CD4-positive, alpha-beta memory T cell (primary cell): ENCODE measurements at regions of chr5 and their contacts with region 1.

Region 1: DNA sequence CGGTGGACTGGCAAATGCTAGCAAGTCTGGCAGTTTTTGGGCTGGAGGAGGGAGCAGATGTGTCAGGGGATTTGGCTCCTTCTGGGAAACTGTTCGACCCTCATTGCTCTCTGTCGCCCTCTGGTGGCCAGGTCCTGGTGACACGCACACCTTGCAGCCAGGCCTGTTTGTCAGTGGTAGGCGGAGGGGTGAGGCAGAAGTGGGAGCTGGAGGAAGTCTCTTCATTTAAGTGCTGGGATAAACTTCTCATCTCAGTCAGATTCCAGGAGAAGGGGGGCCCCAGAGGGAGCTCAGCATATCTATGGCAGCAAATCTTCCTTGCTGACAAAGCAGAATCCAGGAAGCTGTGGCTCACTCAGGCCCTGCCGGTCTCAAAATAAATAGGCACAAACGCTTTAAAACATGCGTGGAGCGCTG is 326.5 kb downstream of the ZSWIM6 start:
- DNase-seq: peak; percentile 58 to 67 (median 61)
- H3K4me3 ChIP-seq: no peak overlapping the region
- H3K4me3 Mint-ChIP-seq: no peak overlapping the region
- H3K27ac ChIP-seq: no peak overlapping the region
- H3K27ac Mint-ChIP-seq: no peak overlapping the region
- H3K4me1 ChIP-seq: no peaks in the 10 kb centered on the region
- H3K4me1 Mint-ChIP-seq: peaks cover 0 to 2% (median 0%) of the 10 kb centered on the region in 4 donors
- H3K27me3 ChIP-seq: peaks cover 3% of the 10 kb centered on the region
- H3K27me3 Mint-ChIP-seq: peaks cover 5 to 19% of the 10 kb centered on the region in 2 donors

Region 2: DNA sequence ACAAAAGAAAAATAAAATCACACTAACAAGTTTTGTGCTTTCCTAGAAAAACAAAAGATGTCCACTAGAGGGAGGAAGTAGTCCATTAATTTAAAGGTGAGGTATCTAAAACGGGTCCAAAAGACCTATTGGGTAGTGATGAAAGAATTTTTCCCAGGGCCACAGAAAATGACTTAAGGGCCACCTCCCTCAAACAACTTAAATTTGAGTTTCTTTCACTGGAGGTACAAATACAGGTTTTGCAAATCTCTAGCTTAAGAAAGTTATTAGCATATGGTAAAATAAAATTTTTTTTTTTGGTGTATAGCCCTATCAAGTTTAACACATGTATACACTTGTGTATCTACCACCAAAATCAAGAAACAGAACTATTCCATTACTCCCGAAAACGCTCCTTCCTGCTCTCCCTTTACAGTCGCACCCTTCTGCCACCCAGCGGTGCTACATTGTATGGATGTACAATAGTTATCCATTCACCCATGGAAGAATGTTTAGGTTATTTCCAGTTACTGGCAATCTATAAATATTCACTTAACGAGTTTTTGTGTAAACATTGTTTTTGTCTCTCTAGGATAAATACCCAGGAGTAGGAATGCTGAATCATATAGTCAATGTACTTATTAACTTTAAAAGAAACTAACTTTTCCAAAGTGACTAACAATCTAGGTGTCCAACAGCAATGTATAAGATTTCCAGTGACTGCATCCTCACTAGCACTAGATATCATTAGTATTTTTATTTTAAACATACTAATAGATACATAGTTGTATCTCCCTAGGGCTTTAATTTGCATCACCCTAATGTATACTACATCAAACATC is 980.5 kb before region 1 on chr5:
- CTCF ChIA-PET with region 1: interaction called, 25 read pairs
- POLR2A ChIA-PET with region 1: no interaction called
- intact Hi-C with region 1: loop called (anchors 1 kb)
- DNase-seq: peak in 4 of 5 donors; percentile 26 to 33 (median 28)
- H3K4me3 ChIP-seq: no peak overlapping the region
- H3K4me3 Mint-ChIP-seq: peak overlapping the region in 3 of 8 donors; percentile 5 to 46 (median 44)
- H3K27ac ChIP-seq: no peak overlapping the region
- H3K27ac Mint-ChIP-seq: no peak overlapping the region
- H3K4me1 ChIP-seq: peaks cover 7% of the 10 kb centered on the region
- H3K4me1 Mint-ChIP-seq: peaks cover 0 to 4% (median 1%) of the 10 kb centered on the region in 4 donors
- H3K27me3 ChIP-seq: no peaks in the 10 kb centered on the region
- H3K27me3 Mint-ChIP-seq: peaks cover 0 to 1% of the 10 kb centered on the region in 2 donors

Region 3: GRCh38 chr5:60960591-60960990 is 698.0 kb before region 1 on chr5:
- CTCF ChIA-PET with region 1: interaction called, 35 read pairs
- POLR2A ChIA-PET with region 1: no interaction called
- intact Hi-C with region 1: loop called (anchors 1 kb)
- DNase-seq: peak in 4 of 5 donors; percentile 8 to 24 (median 20)
- H3K4me3 ChIP-seq: no peak overlapping the region
- H3K4me3 Mint-ChIP-seq: no peak overlapping the region
- H3K27ac ChIP-seq: no peak overlapping the region
- H3K27ac Mint-ChIP-seq: no peak overlapping the region
- H3K4me1 ChIP-seq: peaks cover 8% of the 10 kb centered on the region
- H3K4me1 Mint-ChIP-seq: peaks cover 5 to 13% (median 9%) of the 10 kb centered on the region in 4 donors
- H3K27me3 ChIP-seq: no peaks in the 10 kb centered on the region
- H3K27me3 Mint-ChIP-seq: no peaks in the 10 kb centered on the region

Region 4: GRCh38 chr5:61055434-61056006 is 603.1 kb before region 1 on chr5:
- CTCF ChIA-PET with region 1: interaction called, 107 read pairs
- POLR2A ChIA-PET with region 1: no interaction called
- intact Hi-C with region 1: loop called (anchors 1 kb)
- DNase-seq: peak; percentile 5 to 32 (median 16)
- H3K4me3 ChIP-seq: no peak overlapping the region
- H3K4me3 Mint-ChIP-seq: no peak overlapping the region
- H3K27ac ChIP-seq: no peak overlapping the region
- H3K27ac Mint-ChIP-seq: no peak overlapping the region
- H3K4me1 ChIP-seq: no peaks in the 10 kb centered on the region
- H3K4me1 Mint-ChIP-seq: peaks cover 0 to 3% (median 0%) of the 10 kb centered on the region in 4 donors
- H3K27me3 ChIP-seq: no peaks in the 10 kb centered on the region
- H3K27me3 Mint-ChIP-seq: no peaks in the 10 kb centered on the region

Region 5: DNA sequence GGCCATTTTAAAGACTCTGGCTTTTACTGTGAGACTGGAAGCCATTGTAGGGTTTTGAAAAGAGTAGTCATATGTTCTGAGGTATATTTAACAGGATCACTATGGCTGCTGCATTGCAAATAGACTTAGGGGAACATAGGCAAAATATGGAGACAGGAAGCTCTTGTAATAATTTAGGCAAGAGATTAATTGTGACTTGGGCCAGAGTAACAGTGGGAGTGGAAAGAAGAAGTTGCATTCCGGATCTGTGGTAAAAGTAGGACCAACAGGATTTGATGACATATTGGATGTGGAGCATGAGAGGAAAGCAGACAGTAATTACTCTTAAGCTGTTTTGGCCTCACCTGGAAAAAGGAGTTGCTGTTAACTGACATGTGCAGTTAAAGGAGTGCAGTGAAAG is 582.0 kb before region 1 on chr5:
- CTCF ChIA-PET with region 1: no interaction called
- POLR2A ChIA-PET with region 1: no interaction called
- intact Hi-C with region 1: no loop called
- DNase-seq: no peak
- H3K4me3 ChIP-seq: no peak overlapping the region
- H3K4me3 Mint-ChIP-seq: no peak overlapping the region
- H3K27ac ChIP-seq: no peak overlapping the region
- H3K27ac Mint-ChIP-seq: no peak overlapping the region
- H3K4me1 ChIP-seq: no peaks in the 10 kb centered on the region
- H3K4me1 Mint-ChIP-seq: peaks cover 0 to 2% (median 0%) of the 10 kb centered on the region in 4 donors
- H3K27me3 ChIP-seq: no peaks in the 10 kb centered on the region
- H3K27me3 Mint-ChIP-seq: no peaks in the 10 kb centered on the region

Region 6: DNA sequence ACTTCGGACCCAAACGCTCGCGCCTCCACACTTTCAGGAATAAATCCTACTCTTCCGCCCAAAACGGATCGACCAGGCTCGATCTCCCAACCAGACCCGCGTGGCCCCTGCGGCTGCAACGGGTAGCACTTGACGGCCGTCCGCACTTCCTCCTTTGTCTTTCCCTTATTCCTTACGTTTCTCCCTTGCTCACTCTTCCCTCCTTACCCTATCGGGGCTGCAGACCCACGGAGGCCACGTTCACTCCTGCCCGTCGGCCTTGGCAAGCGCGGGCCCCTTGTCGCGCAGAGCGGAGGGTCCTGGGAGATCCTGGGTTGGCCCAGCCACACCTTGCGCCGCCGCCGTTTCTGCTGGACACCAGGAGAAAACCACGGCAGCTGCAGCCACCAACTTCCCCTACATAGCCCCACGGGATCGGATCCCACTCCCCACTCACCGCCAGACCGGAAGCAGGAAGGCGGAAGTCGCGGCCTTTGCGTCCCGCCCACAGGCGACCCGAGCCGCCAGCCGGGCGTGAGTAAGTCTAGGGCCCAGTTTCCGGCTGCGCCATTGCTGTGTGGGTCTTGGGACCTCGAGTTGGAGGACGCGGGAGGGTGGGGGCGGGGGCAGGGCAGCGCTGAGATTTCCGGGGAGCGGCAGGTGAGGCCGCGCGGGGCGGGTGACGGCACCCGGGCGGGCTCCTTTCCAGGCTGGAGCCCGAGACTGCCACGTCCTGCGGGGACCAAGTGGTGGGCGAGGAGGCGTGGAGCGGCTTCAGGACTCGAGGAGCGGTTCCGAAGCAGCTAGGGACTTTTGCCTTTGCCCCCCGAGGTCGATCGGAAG is 496.4 kb before region 1 on chr5 and contains the start of gene SMIM15:
- CTCF ChIA-PET with region 1: interaction called, 8 read pairs
- POLR2A ChIA-PET with region 1: no interaction called
- intact Hi-C with region 1: loop called (anchors 5 kb)
- DNase-seq: peak; percentile 67 to 77 (median 72)
- H3K4me3 ChIP-seq: peak within 1 kb of the TSS; percentile 88
- H3K4me3 Mint-ChIP-seq: peak within 1 kb of the TSS; percentile 92 to 100 (median 96)
- H3K27ac ChIP-seq: peak within 1 kb of the TSS; percentile 67
- H3K27ac Mint-ChIP-seq: peak within 1 kb of the TSS; percentile 89 to 99 (median 96)
- H3K4me1 ChIP-seq: peaks cover 26% of the 10 kb centered on the region
- H3K4me1 Mint-ChIP-seq: peaks cover 29 to 46% (median 38%) of the 10 kb centered on the region in 4 donors
- H3K27me3 ChIP-seq: no peaks in the 10 kb centered on the region
- H3K27me3 Mint-ChIP-seq: no peaks in the 10 kb centered on the region
- total RNA-seq, gene SMIM15: 33.1 to 37.7 TPM

Region 7: DNA sequence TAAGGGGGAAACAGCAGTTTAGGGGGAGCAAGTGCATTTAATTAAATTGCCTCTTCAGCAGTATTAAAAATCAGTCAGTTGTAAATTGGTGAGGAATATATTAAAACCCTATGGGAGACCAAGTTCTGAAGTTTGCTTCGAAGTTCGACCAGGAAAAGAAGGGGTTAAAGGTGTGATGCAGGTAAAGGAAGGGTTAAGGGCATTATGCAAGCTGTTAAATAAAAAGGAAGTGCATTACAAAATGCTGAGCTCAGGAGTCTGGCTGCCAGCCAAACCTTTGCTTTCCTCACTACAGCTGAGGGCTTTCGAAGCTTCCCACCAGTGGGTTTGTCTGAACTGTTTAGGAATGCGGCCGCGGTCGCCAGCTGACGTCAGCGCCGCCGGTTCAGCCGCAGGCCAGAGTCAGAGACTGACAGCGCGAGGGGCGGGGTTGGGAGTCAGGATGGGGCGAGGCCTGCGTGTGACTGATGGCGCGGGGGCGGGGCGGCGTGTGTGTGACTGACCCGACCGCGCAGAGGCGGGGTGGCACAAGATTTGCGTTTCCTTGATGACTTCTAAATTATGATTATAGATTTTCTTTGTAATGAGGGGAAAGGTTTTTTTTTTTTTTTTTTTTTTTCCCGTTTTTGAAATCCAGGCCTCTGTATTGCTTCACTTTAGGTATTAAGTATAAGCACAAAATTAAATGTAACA is 250.0 kb before region 1 on chr5:
- CTCF ChIA-PET with region 1: no interaction called
- POLR2A ChIA-PET with region 1: no interaction called
- intact Hi-C with region 1: loop called (anchors 1 kb)
- DNase-seq: peak; percentile 96 to 99 (median 98)
- H3K4me3 ChIP-seq: no peak overlapping the region
- H3K4me3 Mint-ChIP-seq: peak overlapping the region; percentile 78 to 91 (median 84)
- H3K27ac ChIP-seq: no peak overlapping the region
- H3K27ac Mint-ChIP-seq: peak overlapping the region; percentile 86 to 97 (median 94)
- H3K4me1 ChIP-seq: peaks cover 19% of the 10 kb centered on the region
- H3K4me1 Mint-ChIP-seq: peaks cover 18 to 35% (median 26%) of the 10 kb centered on the region in 4 donors
- H3K27me3 ChIP-seq: no peaks in the 10 kb centered on the region
- H3K27me3 Mint-ChIP-seq: peaks cover 0 to 2% of the 10 kb centered on the region in 2 donors

Region 8: GRCh38 chr5:61647672-61648071 is 10.9 kb before region 1 on chr5:
- CTCF ChIA-PET with region 1: interaction called, 32 read pairs
- POLR2A ChIA-PET with region 1: no interaction called
- intact Hi-C with region 1: no loop called
- DNase-seq: no peak
- H3K4me3 ChIP-seq: no peak overlapping the region
- H3K4me3 Mint-ChIP-seq: no peak overlapping the region
- H3K27ac ChIP-seq: no peak overlapping the region
- H3K27ac Mint-ChIP-seq: no peak overlapping the region
- H3K4me1 ChIP-seq: no peaks in the 10 kb centered on the region
- H3K4me1 Mint-ChIP-seq: no peaks in the 10 kb centered on the region
- H3K27me3 ChIP-seq: no peaks in the 10 kb centered on the region
- H3K27me3 Mint-ChIP-seq: peaks cover 7 to 12% of the 10 kb centered on the region in 2 donors

Region 9: DNA sequence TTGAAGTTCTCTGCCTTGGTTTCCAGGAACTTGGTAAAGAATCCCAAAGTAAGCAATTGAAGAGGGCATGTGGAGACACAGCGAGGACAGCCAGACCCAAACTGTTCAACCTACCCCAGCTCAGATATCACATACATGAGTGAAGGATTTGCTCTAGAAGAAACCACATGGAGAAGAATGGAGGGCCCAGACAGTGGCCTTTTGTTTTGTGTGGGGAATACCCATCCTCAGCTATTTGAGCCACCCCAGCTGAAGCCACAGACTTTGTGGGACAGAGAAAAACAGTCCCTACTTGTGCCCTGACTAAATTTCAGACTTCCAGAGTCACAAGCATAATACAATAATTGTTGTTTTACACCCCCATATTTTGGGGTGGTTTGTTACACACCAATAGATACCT is 60.5 kb after region 1 on chr5:
- CTCF ChIA-PET with region 1: no interaction called
- POLR2A ChIA-PET with region 1: no interaction called
- intact Hi-C with region 1: no loop called
- DNase-seq: no peak
- H3K4me3 ChIP-seq: no peak overlapping the region
- H3K4me3 Mint-ChIP-seq: no peak overlapping the region
- H3K27ac ChIP-seq: no peak overlapping the region
- H3K27ac Mint-ChIP-seq: no peak overlapping the region
- H3K4me1 ChIP-seq: no peaks in the 10 kb centered on the region
- H3K4me1 Mint-ChIP-seq: no peaks in the 10 kb centered on the region
- H3K27me3 ChIP-seq: no peaks in the 10 kb centered on the region
- H3K27me3 Mint-ChIP-seq: peaks cover 2 to 4% of the 10 kb centered on the region in 2 donors